Left cardiac atrium (tissue), 4 donors: ENCODE measurements at regions of chr17 and their contacts with region 1.

Region 1: GRCh38 chr17:29219378-29220047 is 27.1 kb upstream of the CRYBA1 start:
- DNase-seq: peak; percentile 75
- ATAC-seq: peak; percentile 92 to 93

Region 2: DNA sequence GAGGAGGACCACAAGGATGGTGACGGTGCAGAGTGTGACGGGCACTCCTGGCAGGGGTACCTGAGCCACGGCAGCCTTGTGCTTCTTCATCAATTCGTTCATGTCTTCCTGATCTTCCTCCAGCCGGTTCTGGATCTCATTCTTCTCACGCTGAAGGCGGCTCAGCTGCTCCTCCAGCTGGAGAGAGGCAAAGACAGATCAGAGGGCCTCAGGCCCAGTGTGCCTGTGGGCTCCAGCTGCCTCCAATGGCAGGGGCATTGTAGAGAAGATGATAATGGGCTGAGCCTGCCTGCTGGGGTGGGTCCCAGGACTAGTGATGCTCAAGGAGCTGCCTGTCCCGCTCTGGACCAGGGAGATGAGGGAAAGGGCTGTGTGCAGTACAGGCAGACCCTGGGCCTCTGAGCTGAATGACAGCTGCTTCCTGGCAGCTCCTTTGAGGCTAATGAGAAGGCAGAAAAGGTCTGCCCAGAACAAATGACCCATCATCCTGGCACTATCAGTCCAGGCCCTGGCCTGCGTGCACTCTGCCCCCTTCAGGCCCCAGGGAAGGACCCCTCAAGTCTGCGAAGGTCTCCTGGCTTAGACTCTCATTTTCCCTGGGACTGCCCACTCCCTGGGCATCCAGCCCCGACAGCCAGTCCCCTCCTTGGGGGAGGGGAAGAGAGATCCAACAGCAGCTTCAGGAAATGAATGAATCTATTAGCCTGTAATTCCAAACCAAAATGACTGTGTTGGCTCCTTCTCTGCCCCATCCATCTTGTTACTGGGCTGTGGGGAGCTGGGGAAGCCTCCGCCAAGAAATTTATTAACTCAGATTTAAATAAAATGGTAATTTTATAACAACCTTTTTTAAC is 128.5 kb before region 1 on chr17:
- intact Hi-C with region 1: no loop called
- DNase-seq: no peak
- ATAC-seq: no peak

Region 3: DNA sequence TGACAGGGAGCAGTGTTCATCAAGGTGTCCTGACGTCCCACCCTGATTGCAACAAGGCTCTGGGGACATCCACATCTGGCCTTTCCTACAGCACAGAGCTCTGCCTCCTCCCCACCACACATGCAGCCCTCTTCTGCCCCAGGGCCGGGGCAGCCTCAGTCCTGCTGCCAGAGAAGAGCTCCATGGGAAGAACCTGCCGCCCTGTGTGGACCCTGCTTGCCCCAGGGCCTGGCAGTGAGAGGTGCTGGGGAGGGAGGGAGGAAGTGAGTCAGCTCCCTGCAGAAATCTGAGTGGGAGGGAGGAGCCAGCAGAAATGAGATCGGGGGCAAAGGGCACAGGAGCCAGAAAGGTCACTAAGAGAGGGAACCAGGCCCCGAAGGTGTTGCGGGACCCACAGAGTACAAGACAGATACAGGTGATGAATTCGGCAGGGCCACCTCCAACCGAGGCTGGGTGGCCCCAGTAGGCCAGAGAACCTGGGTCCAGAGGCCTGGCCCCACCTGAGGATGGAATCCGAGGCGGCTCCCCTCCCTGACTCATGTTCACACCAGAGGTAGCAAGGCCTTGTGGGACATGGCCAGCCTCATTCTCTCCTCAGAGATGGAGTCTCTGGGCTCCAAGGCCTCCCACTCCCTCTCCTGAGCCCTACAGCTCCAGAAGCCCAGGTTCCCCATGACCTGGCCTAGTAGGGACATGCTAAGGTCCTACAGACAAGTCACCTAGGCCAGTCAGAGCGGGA is 64.1 kb before region 1 on chr17:
- intact Hi-C with region 1: loop called in 1 of 2 experiments (anchors 10 kb)
- DNase-seq: peak; percentile 74
- ATAC-seq: peak; percentile 62 to 89